PC-9 (cell line): ENCODE measurements at regions of chr17 and their contacts with region 1.

Region 1: DNA sequence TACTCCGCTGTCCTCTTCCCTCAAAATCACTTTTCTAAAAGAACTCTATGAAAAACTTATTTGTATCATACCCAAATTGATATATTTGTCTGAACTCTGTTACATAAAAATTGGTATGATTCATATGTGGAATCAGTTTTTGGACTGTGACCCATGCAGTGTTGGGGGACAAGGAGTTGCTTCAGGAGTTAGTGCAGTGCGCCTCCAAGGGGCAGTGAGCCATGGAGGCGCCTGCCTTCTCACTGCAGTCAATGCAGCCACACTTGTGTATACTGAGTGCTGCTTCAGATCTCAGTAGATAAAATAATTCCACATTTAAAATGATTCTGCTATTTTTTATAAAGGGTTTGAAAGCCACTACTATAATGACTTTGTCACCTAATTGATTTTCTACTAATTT is 32.5 kb downstream of the DGKE start:
- DNase-seq: no peak
- H3K4me3 ChIP-seq: no peak overlapping the region
- H3K27ac ChIP-seq: no peak overlapping the region
- H3K4me1 ChIP-seq: no peaks in the 10 kb centered on the region
- H3K27me3 ChIP-seq: no peaks in the 10 kb centered on the region
- CTCF ChIP-seq: no peak

Region 2: DNA sequence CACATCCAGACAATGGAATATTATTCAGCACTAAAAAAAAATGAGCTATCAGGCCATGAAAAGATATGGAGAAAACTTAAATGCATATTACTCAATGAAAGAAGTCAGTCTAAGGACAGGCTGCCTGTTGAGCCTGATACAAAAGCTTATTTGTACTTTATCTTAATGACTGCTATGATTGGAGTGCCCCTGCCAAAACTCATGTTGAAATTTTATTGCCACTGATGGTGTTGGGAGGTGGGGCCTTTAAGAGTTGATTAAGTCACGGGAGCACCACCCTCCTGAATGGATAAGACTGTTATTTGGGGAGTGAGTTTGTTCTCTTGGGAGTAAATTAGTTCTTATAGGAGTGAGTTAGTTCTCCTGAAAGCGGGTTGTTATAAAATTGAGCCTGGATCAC is 42.6 kb before region 1 on chr17:
- CTCF ChIA-PET with region 1: no interaction called
- POLR2A ChIA-PET with region 1: no interaction called
- intact Hi-C with region 1: no loop called
- DNase-seq: no peak
- H3K4me3 ChIP-seq: no peak overlapping the region
- H3K27ac ChIP-seq: no peak overlapping the region
- H3K4me1 ChIP-seq: 0 out of 2 replicates have a peak, but pooled peaks cover 17% of the 10 kb centered on the region
- H3K27me3 ChIP-seq: no peaks in the 10 kb centered on the region
- CTCF ChIP-seq: no peak

Region 3: DNA sequence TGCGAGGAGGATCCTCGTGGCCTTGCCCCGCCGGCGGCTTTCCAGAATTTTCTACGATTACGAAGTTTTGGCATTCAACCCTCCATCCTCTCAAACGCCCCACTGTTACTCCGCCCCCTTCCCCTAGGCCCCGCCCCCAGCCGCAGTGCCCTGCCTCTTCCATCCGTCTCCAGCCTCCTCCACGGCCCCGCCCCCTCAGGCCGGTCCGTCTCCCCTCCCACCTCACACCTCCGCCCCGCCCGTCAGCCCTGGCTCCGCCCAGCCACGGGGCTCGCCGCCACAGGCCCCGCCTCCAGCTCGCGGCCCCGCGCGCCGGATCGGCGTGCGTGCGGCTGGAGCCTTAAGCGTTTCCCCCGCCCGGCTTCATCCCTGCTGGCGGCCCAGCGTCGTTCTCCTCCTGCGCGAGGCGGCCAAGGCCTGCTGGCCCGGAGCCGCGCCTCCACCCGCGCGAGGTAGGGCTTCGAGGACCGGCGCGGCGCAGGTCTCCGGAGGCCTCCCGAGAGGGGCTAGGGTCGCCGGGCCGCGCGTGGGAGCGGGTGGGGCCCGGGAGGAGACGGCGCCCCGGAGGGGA is 32.6 kb before region 1 on chr17 and contains the starts of genes C17orf67 and DGKE:
- CTCF ChIA-PET with region 1: no interaction called
- POLR2A ChIA-PET with region 1: no interaction called
- intact Hi-C with region 1: loop called (anchors 1 kb)
- DNase-seq: peak; percentile 82 to 97
- H3K4me3 ChIP-seq: peak within 1 kb of the TSS; percentile 94
- H3K27ac ChIP-seq: peak within 1 kb of the TSS; percentile 24
- H3K4me1 ChIP-seq: peaks cover 32% of the 10 kb centered on the region
- H3K27me3 ChIP-seq: no peaks in the 10 kb centered on the region
- CTCF ChIP-seq: no peak
- total RNA-seq, gene C17orf67: 4.3 and 6.4 TPM in 2 replicates
- total RNA-seq, gene DGKE: 11.0 and 16.2 TPM in 2 replicates

Region 4: DNA sequence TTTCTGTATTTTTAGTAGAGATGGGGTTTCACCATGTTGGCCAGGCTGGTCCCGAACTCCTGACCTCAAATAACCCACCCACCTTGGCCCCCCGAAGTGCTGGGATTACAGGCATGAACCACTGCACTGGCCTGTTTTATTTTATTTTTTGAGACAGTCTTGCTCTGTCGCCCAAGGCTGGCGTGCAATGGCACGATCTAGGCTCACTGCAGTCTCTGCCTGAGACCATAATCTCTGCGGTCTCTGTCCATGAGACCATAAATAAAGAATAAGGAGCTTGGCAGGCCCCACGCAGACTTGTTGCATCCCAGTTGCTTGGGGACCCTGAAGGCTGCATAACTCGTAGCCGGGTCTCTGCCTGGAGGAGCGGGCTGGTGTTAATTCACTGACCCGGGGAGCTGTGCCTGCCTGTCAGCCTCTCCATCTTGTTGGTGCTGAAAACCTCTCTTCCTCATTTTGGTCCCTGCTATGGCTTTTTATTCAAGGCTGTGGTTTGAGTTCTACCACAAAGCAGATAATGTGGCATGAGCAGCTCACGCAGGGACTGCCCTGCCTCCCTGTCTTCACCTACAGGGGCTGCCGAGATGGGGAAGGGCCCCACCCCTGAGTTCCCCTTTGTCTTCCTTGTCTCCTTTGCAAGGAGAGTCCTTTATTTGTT is 471.9 kb after region 1 on chr17:
- CTCF ChIA-PET with region 1: no interaction called
- POLR2A ChIA-PET with region 1: no interaction called
- intact Hi-C with region 1: no loop called
- DNase-seq: no peak
- H3K4me3 ChIP-seq: no peak overlapping the region
- H3K27ac ChIP-seq: no peak overlapping the region
- H3K4me1 ChIP-seq: no peaks in the 10 kb centered on the region
- H3K27me3 ChIP-seq: peaks cover 25% of the 10 kb centered on the region
- CTCF ChIP-seq: no peak